ENCODE measurements at regions of chr19 and their contacts with region 1.

Region 1: DNA sequence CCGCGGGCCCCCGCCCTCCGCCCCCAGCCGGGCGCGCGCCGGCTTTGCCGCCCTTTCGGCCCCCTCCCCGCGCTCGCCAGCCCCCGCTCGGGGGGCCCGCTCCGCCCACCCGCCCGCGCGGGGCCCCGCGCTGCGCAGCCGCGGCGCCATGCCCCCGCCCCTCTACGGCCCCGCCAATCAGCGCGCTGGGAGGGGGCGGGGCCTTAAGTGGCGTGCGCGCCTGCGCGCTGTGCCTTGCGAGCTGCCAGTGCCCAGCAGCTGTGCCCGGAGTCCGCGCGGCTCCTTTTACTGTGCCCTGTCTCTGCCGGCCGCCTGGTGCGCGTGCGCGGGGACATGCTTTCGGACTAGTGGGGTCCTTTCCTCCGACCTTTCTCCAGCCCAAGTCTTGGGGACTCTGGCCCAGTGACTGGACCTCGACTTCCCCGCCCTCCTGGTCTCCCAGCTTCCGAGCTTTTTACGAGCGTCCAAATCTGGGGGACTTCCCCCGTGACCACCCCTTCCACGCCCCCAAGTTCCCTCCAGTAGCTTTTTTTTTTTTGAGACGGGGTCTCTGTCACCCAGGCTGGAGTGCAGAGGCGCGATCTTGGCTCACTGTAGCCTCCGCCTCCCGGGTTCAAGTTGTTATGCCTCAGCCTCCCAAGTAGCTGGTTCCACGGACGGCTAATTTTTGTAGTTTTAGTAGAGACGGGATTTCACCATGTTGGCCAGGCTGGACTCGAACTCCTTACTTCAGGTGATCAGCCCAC is at the start of gene MBD3:
- DNase-seq: peak; percentile 96

Region 2: DNA sequence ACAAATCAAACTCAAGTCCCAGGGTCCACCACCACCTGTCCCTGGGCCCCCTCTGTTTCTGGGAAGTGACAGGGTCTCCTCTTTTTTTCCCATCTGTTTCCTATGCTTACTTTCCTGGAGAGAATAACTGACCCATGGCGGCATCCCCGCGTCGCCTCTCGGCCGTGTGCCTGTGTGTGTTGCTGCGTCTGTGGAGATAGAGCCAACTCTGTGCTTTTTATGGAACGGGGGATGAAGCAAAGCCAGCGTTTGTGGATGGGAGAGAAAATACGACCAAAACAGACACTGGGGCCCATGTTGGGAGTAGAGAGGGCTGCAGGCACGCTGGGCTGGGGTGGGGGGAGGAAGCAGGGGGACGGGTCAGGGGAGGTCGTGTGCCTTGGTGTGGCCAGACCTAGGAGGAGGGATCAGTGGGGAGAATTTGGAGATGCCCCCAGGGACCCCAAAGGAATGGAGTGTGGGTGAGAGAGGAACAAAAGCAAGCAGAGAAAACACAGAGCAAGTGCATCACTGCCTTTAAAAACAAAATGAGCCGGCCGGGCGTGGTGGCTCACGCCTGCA is 52.5 kb before region 1 on chr19:
- CTCF ChIA-PET with region 1: no interaction called
- POLR2A ChIA-PET with region 1: interaction called, 11 read pairs
- DNase-seq: no peak

Region 3: GRCh38 chr19:1577090-1577928 is 15.6 kb before region 1 on chr19:
- CTCF ChIA-PET with region 1: no interaction called
- POLR2A ChIA-PET with region 1: interaction called, 19 read pairs
- DNase-seq: no peak

Region 4: GRCh38 chr19:1605236-1606137 is 12.6 kb after region 1 on chr19 and contains the start of gene UQCR11:
- CTCF ChIA-PET with region 1: interaction called, 3 read pairs
- POLR2A ChIA-PET with region 1: interaction called, 28 read pairs
- DNase-seq: peak; percentile 96

Region 5: DNA sequence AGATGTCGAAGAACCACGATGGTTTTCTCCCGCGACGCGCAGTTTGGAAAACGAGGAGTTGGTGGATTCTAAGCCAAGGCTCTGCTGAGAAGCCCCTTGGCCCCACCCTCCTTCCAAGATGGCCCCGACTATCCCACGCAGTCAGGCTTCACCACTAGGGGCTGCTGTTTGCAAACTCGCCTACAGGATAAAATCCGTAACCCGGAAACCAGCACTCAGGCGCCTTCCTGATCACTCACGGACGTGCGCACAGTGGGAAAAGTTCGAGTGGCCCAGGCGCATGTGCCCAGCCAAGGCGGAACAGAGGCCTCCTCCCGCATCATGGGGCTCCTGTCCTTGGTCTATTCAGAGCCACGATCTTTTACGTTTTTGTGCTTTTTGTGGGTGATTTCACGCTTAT is 31.5 kb after region 1 on chr19:
- CTCF ChIA-PET with region 1: no interaction called
- POLR2A ChIA-PET with region 1: no interaction called
- DNase-seq: peak; percentile 81

Measured in HEK293T (cell line).